ENCODE measurements at regions of chr11 and their contacts with region 1.

Region 1: DNA sequence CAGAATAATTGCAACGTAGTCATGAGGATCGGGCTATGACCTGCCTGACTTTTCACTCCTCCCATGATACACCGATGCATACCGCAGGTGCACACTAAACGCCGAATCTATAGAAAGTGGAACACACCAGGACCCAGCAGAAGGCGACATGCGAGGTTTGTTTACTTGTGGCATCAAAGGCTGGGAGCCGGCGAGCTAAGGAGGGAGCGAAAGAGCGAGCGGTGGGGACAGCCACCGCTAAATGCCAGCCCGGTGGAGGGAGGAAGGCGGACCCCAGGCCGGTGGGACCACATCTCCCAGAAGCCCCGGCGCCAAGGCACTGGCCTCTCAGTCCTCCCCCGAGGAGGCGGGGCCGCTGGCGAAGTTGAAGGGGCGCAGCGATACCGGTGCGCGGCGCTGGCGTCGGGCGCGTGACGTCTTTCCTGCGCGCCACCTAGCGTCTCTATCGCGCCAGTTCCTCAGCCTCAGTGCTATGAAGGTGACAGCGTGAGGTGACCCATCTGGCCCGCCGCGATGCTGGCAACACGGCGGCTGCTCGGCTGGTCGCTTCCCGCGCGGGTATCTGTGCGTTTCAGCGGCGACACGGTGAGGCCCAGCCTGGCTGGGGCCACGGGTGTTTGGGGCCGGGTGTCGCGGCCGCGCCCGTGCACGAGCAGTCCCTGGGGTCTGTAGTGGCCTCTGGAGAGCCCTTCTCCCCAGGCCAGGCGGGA is at the start of gene NDUFV1:
- DNase-seq: peak; percentile 99
- ATAC-seq: peak; percentile 99
- total RNA-seq, gene NDUFV1: 724 TPM

Region 2: DNA sequence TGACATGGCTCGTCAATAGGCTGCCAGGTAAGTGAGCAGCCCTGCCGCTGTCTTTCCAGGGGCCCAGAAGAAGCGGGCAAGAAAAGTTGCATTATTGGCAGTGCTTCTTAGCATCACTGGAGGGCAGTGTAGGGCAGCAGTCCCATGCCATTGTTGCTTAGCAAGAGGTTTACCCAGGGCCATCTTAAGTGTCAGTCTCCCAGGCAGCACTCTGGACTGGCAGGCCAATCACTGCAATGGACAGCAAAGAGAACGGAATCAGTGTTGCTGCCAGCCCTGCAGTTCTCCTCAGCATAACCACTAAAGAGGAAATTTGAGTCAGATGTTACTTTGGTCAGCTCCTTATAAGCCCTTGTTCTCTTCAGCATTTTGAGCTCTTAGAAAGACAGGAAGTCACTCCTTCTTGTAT is 353.8 kb before region 1 on chr11:
- intact Hi-C with region 1: no loop called
- DNase-seq: no peak
- ATAC-seq: peak; percentile 62

Region 3: DNA sequence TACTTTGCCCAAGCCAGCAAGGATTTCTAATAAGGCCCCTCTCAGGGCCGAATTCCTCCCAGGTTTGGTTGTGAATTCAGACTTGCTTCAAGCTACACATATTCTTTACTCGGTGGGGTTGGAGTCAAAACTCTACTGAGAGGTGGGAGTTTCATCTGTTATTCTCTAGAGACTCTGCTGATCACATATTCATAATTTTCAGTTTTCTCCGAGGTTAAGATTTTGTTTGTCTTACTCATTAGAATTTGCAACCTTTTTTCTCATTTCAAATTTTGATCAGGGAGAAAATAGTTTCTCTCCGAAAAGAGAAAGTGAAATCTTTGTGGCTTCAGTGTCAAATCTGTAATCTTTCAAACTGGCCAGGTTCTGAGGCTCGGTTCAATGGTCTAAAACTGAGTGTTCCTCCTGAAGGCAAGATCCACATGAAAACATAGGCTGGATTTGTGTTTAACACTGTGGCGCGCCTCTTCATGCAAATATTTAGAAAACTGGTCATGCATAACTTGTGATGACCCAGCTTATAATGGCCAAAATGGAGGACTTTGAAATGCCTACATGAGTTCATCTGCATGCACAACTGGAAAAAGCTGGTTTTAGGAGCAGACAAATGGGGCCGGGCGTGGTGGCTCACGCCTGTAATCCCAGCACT is 44.6 kb before region 1 on chr11:
- intact Hi-C with region 1: no loop called
- DNase-seq: no peak
- ATAC-seq: no peak

Region 4: GRCh38 chr11:67572747-67573419 is 33.8 kb before region 1 on chr11:
- intact Hi-C with region 1: loop called (anchors 5 kb)
- DNase-seq: no peak
- ATAC-seq: no peak

Region 5: DNA sequence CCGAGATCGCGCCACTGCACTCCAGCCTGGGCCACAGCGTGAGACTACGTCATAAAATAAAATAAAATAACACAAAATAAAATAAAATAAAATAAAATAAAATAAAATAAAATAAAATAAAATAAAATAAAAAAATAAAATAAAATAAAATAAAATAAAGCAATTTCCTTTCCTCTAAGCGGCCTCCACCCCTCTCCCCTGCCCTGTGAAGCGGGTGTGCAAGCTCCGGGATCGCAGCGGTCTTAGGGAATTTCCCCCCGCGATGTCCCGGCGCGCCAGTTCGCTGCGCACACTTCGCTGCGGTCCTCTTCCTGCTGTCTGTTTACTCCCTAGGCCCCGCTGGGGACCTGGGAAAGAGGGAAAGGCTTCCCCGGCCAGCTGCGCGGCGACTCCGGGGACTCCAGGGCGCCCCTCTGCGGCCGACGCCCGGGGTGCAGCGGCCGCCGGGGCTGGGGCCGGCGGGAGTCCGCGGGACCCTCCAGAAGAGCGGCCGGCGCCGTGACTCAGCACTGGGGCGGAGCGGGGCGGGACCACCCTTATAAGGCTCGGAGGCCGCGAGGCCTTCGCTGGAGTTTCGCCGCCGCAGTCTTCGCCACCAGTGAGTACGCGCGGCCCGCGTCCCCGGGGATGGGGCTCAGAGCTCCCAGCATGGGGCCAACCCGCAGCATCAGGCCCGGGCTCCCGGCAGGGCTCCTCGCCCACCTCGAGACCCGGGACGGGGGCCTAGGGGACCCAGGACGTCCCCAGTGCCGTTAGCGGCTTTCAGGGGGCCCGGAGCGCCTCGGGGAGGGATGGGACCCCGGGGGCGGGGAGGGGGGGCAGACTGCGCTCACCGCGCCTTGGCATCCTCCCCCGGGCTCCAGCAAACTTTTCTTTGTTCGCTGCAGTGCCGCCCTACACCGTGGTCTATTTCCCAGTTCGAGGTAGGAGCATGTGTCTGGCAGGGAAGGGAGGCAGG is 23.1 kb before region 1 on chr11 and contains the start of gene GSTP1:
- intact Hi-C with region 1: loop called (anchors 1 kb)
- DNase-seq: peak; percentile 97
- ATAC-seq: peak; percentile 98
- total RNA-seq, gene GSTP1: 393 TPM